ENCODE measurements at regions of chr18 and their contacts with region 1.

Region 1: GRCh38 chr18:26307189-26307773 is 81.0 kb downstream of the TAF4B start:
- DNase-seq: peak; percentile 54
- H3K4me3 ChIP-seq: no peak overlapping the region; a peak in 1 of 4 replicates
- H3K27ac ChIP-seq: no peak overlapping the region
- H3K4me1 ChIP-seq: peaks cover 0 to 2% of the 10 kb centered on the region in 2 experiments; a peak in 1 of 4 replicates
- H3K27me3 ChIP-seq: no peaks in the 10 kb centered on the region
- CTCF ChIP-seq: peak; percentile 83
- EP300 ChIP-seq: no peak
- RAD21 ChIP-seq: peak; percentile 92

Region 2: GRCh38 chr18:24791751-24792560 is 1515.3 kb before region 1 on chr18:
- CTCF ChIA-PET with region 1: no interaction called
- POLR2A ChIA-PET with region 1: no interaction called
- DNase-seq: peak; percentile 4
- H3K4me3 ChIP-seq: no peak overlapping the region
- H3K27ac ChIP-seq: no peak overlapping the region
- H3K4me1 ChIP-seq: peaks cover 0 to 4% of the 10 kb centered on the region in 2 experiments; a peak in 1 of 4 replicates
- H3K27me3 ChIP-seq: no peaks in the 10 kb centered on the region
- CTCF ChIP-seq: no peak
- EP300 ChIP-seq: no peak
- RAD21 ChIP-seq: no peak

Region 3: GRCh38 chr18:26322890-26323653 is 15.8 kb after region 1 on chr18:
- CTCF ChIA-PET with region 1: interaction called, 10 read pairs
- POLR2A ChIA-PET with region 1: no interaction called
- DNase-seq: no peak
- H3K4me3 ChIP-seq: no peak overlapping the region
- H3K27ac ChIP-seq: no peak overlapping the region
- H3K4me1 ChIP-seq: no peaks in the 10 kb centered on the region
- H3K27me3 ChIP-seq: no peaks in the 10 kb centered on the region
- CTCF ChIP-seq: no peak
- EP300 ChIP-seq: no peak
- RAD21 ChIP-seq: no peak

Region 4: DNA sequence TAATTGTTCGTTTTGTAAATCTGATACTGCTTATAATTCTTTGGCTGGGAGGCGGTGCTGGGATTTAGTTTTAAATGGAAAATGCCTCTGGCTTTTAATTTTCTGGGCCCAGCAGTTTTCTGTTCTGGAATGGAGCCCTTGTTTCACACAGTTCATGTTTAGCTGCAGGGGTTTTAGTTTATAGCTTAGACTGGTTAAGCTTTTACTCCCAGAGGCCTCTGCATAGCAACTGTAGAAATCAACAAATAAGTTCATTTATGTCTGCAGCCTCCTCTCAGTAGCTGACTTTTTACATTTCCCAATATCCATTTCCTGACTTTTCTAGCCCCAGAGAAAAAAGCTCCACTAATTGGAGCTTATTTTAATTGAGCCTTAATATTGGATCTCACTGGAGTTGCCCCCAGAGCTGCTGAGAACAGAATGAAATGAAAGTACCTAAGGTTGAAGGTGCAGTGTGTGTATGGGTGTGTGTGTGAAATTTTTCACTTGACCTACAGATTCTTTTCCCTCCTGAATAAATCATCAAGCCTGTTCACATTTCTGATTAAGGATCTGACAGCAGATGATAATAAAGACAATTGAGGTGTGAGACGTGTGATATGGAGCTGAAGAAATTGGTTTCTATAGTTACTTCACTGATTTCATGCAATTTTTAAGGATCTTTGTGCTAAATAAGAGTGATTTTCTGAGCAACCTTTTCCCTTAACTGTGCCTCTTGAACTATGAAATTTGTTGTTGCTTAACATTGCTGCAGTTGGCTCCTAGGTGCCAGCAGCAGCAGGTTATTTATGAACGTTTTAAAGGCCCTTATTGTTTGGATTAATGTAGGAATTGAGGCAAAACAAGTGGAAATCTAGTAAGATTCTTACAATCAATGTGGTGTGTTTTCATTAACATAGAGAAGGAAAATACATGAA is 28.5 kb after region 1 on chr18:
- CTCF ChIA-PET with region 1: interaction called, 19 read pairs
- POLR2A ChIA-PET with region 1: no interaction called
- DNase-seq: peak; percentile 23
- H3K4me3 ChIP-seq: no peak overlapping the region
- H3K27ac ChIP-seq: peak overlapping the region in 1 of 2 experiments; percentile 91; a peak in 2 of 4 replicates
- H3K4me1 ChIP-seq: peaks cover 0 to 26% of the 10 kb centered on the region in 2 experiments; a peak in 3 of 4 replicates
- H3K27me3 ChIP-seq: no peaks in the 10 kb centered on the region
- CTCF ChIP-seq: no peak
- EP300 ChIP-seq: peak in 1 of 2 experiments; percentile 46; a peak in 1 of 4 replicates
- RAD21 ChIP-seq: no peak

Region 5: GRCh38 chr18:26650310-26651268 is 343.3 kb after region 1 on chr18:
- CTCF ChIA-PET with region 1: interaction called, 16 read pairs
- POLR2A ChIA-PET with region 1: no interaction called
- DNase-seq: no peak
- H3K4me3 ChIP-seq: no peak overlapping the region
- H3K27ac ChIP-seq: peak overlapping the region in 1 of 2 experiments; percentile 89; a peak in 2 of 4 replicates
- H3K4me1 ChIP-seq: peaks cover 0 to 28% of the 10 kb centered on the region in 2 experiments; a peak in 2 of 4 replicates
- H3K27me3 ChIP-seq: no peaks in the 10 kb centered on the region
- CTCF ChIP-seq: no peak
- EP300 ChIP-seq: no peak
- RAD21 ChIP-seq: no peak